ENCODE measurements at regions of chr16 and their contacts with region 1.

Region 1: GRCh38 chr16:48353565-48354163 is 31.5 kb downstream of the SIAH1 start:
- DNase-seq: peak; percentile 78 to 84 (median 82)
- H3K4me3 ChIP-seq: no peak overlapping the region
- H3K4me3 Mint-ChIP-seq: no peak overlapping the region
- H3K27ac ChIP-seq: no peak overlapping the region
- H3K27ac Mint-ChIP-seq: peak overlapping the region in 5 of 7 donors; percentile 1 to 68 (median 63)
- H3K4me1 ChIP-seq: no peaks in the 10 kb centered on the region
- H3K4me1 Mint-ChIP-seq: peaks cover 8% of the 10 kb centered on the region
- H3K27me3 ChIP-seq: no peaks in the 10 kb centered on the region
- H3K27me3 Mint-ChIP-seq: no peaks in the 10 kb centered on the region
- CTCF ChIP-seq: peak; percentile 96

Region 2: DNA sequence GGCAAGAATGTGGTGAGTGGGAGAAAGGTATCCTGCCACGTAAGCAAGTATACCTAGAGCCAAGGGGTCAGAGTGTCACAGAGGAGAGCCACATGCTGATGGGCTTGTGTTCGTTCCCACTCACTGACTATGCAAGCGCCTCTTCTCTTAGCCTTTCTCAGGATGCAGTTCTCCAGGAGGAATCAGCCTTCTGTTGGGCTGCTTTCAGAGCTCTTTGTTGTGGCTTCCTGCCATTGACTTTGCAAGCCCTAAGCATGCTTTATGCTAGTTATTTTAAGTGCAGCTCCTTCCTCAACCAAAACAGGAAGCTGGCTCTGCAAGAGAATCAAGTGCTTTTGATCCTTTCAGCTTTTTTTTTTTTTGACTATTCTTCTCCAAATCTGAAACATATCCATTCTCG is 35.0 kb before region 1 on chr16:
- intact Hi-C with region 1: no loop called
- DNase-seq: peak; percentile 30 to 56 (median 52)
- H3K4me3 ChIP-seq: peak overlapping the region in 2 of 3 experiments; percentile 22 to 53
- H3K4me3 Mint-ChIP-seq: peak overlapping the region; percentile 49 to 52
- H3K27ac ChIP-seq: peak overlapping the region; percentile 3 to 72
- H3K27ac Mint-ChIP-seq: peak overlapping the region; percentile 62 to 93 (median 88)
- H3K4me1 ChIP-seq: peaks cover 25 to 26% of the 10 kb centered on the region in 2 donors
- H3K4me1 Mint-ChIP-seq: peaks cover 27% of the 10 kb centered on the region
- H3K27me3 ChIP-seq: no peaks in the 10 kb centered on the region
- H3K27me3 Mint-ChIP-seq: no peaks in the 10 kb centered on the region
- CTCF ChIP-seq: no peak

Region 3: GRCh38 chr16:48470232-48470631 is 116.6 kb after region 1 on chr16:
- intact Hi-C with region 1: no loop called
- DNase-seq: no peak
- H3K4me3 ChIP-seq: no peak overlapping the region
- H3K4me3 Mint-ChIP-seq: no peak overlapping the region
- H3K27ac ChIP-seq: no peak overlapping the region
- H3K27ac Mint-ChIP-seq: peak overlapping the region in 1 of 7 donors; percentile 18
- H3K4me1 ChIP-seq: no peaks in the 10 kb centered on the region
- H3K4me1 Mint-ChIP-seq: no peaks in the 10 kb centered on the region
- H3K27me3 ChIP-seq: no peaks in the 10 kb centered on the region
- H3K27me3 Mint-ChIP-seq: peaks cover 0 to 5% (median 1%) of the 10 kb centered on the region in 3 donors
- CTCF ChIP-seq: no peak

Region 4: GRCh38 chr16:48542020-48542473 is 188.4 kb after region 1 on chr16:
- intact Hi-C with region 1: loop called (anchors 2 to 5 kb)
- DNase-seq: peak; percentile 51 to 66 (median 62)
- H3K4me3 ChIP-seq: no peak overlapping the region
- H3K4me3 Mint-ChIP-seq: peak overlapping the region; percentile 21 to 42
- H3K27ac ChIP-seq: peak overlapping the region; percentile 8 to 50
- H3K27ac Mint-ChIP-seq: peak overlapping the region in 6 of 7 donors; percentile 5 to 75 (median 56)
- H3K4me1 ChIP-seq: peaks cover 9% of the 10 kb centered on the region in 2 donors
- H3K4me1 Mint-ChIP-seq: peaks cover 14% of the 10 kb centered on the region
- H3K27me3 ChIP-seq: no peaks in the 10 kb centered on the region
- H3K27me3 Mint-ChIP-seq: peaks cover 0 to under 1% (median 0%) of the 10 kb centered on the region in 3 donors
- CTCF ChIP-seq: peak; percentile 64

Region 5: DNA sequence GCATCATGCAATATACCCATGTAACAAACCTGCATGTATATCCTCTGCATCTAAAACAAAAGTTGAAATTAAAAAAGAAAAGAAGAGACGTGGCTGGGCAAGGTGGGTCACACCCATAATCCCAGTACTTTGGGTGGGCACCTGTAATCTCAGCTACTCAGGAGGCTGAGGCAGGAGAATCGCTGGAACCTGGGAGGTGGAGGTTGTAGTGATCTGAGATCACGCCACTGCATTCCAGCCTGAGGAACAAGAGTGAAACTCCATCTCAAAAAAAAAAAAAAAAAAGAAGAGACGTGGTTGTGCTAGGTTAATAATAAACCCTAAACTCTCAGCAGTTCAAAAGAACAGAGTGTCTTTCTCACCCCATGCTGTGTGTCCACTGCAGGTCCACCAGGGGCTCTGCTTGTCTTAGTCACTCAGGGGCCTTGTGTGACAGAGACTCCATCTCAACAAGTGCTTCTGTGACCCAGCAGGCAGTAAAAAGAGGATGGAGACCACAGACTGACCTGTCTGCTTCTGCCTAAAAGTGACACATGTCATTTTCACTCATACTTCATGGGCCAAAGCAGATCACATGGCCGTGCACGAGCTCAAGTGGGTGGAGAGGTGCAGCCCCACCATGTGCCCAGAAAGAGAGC is 278.6 kb after region 1 on chr16:
- intact Hi-C with region 1: loop called (anchors 2 to 5 kb)
- DNase-seq: peak in 1 of 3 donors; percentile 32
- H3K4me3 ChIP-seq: no peak overlapping the region
- H3K4me3 Mint-ChIP-seq: no peak overlapping the region
- H3K27ac ChIP-seq: no peak overlapping the region
- H3K27ac Mint-ChIP-seq: peak overlapping the region in 1 of 7 donors; percentile 19
- H3K4me1 ChIP-seq: peaks cover 6 to 11% of the 10 kb centered on the region in 2 donors
- H3K4me1 Mint-ChIP-seq: peaks cover 10% of the 10 kb centered on the region
- H3K27me3 ChIP-seq: no peaks in the 10 kb centered on the region
- H3K27me3 Mint-ChIP-seq: peaks cover 0 to 5% (median under 1%) of the 10 kb centered on the region in 3 donors
- CTCF ChIP-seq: no peak

Measured in CD14-positive monocyte (primary cell).